Heart right ventricle (tissue), 16 donors: ENCODE measurements at regions of chr2 and their contacts with region 1.

Region 1: GRCh38 chr2:71798266-71799012 is 345.1 kb downstream of the DYSF start:
- DNase-seq: peak; percentile 26 to 38
- ATAC-seq: peak in 5 of 8 donors; percentile 54 to 67 (median 57)
- H3K4me3 ChIP-seq: no peak overlapping the region
- H3K27ac ChIP-seq: no peak overlapping the region
- H3K4me1 ChIP-seq: peaks cover 0 to 20% (median 6%) of the 10 kb centered on the region in 9 donors
- H3K27me3 ChIP-seq: no peaks in the 10 kb centered on the region
- CTCF ChIP-seq: peak; percentile 68 to 83 (median 75)

Region 2: GRCh38 chr2:71348302-71348701 is 450.1 kb before region 1 on chr2:
- intact Hi-C with region 1: no loop called
- DNase-seq: peak in 1 of 2 donors; percentile 21
- ATAC-seq: peak in 5 of 8 donors; percentile 20 to 69 (median 58)
- H3K4me3 ChIP-seq: no peak overlapping the region
- H3K27ac ChIP-seq: no peak overlapping the region
- H3K4me1 ChIP-seq: peaks cover 0 to 51% (median 11%) of the 10 kb centered on the region in 9 donors
- H3K27me3 ChIP-seq: no peaks in the 10 kb centered on the region
- CTCF ChIP-seq: no peak

Region 3: GRCh38 chr2:71545572-71546274 is 252.7 kb before region 1 on chr2:
- intact Hi-C with region 1: loop called in 9 of 10 experiments (anchors 2 to 10 kb)
- DNase-seq: peak in 1 of 2 donors; percentile 55
- ATAC-seq: peak; percentile 59 to 83 (median 78)
- H3K4me3 ChIP-seq: peak overlapping the region in 6 of 10 donors; percentile 15 to 30 (median 24)
- H3K27ac ChIP-seq: peak overlapping the region in 9 of 10 donors; percentile 34 to 79 (median 71)
- H3K4me1 ChIP-seq: peaks cover 0 to 17% (median 13%) of the 10 kb centered on the region in 9 donors
- H3K27me3 ChIP-seq: no peaks in the 10 kb centered on the region
- CTCF ChIP-seq: peak; percentile 66 to 83 (median 75)

Region 4: DNA sequence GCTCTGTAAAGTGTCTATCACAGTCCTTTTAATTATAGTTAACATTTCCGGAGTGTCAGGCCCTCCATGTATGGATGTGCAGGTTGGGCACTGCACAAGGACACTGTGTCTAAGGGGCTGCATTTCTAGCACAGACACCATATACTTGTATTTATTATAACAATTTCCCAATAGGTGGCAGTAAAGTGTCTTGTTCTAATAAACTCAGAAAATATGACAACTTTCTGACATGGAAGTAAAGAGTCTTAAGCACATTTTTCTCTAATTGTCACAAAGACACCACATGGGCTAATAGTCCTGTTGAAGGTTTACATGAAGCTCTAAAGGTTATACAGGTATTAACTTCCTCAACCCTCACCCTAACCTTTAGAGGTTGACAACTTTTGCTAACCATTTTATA is 188.5 kb before region 1 on chr2:
- intact Hi-C with region 1: loop called in 8 of 10 experiments (anchors 2 to 10 kb)
- DNase-seq: no peak
- ATAC-seq: peak in 2 of 8 donors; percentile 27 to 36
- H3K4me3 ChIP-seq: no peak overlapping the region
- H3K27ac ChIP-seq: peak overlapping the region in 1 of 10 donors; percentile 0
- H3K4me1 ChIP-seq: peaks cover 14 to 46% (median 32%) of the 10 kb centered on the region in 9 donors
- H3K27me3 ChIP-seq: no peaks in the 10 kb centered on the region
- CTCF ChIP-seq: peak in 7 of 9 donors; percentile 30 to 59 (median 48)

Region 5: DNA sequence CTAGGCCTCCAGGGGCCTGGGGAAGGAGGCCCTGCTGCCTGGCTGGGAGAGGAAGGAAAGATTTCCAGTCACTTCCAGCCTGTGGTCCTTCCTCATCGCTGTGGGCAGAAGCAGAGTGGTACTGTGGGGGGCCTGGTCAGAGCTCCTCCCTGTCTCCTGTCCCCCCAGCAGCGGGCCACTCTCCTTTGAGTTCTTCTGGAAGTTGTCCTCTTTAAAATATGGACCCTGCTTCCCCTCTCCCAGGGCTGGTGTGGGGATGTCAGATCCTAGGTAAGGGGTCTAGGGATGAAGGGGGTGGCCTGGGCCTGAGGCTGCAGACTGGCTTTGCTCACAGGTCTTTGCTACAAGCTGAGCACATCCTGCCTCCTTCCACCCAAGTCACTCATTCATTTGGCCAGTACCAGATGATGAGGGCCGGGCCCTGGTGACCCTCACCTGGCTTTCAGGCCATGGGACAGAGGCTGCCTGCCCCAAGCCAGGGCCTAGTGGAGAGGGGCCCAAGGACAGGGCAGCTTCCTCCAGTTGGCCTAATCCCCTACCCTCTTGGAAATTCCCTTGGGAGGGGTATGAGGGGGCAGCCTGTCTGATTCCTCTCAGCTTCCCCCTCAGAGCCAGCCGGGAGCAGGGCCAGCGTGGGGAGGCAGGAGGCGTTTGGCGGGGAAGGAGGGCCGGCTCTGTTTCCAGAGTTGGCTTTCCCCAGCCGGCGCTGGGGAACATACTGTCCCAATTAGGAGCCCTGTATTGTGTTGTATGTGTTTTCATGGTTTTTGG is 113.2 kb before region 1 on chr2:
- intact Hi-C with region 1: loop called in 6 of 10 experiments (anchors 5 to 10 kb)
- DNase-seq: no peak
- ATAC-seq: peak; percentile 34 to 90 (median 50)
- H3K4me3 ChIP-seq: no peak overlapping the region
- H3K27ac ChIP-seq: peak overlapping the region in 7 of 10 donors; percentile 4 to 62 (median 30)
- H3K4me1 ChIP-seq: peaks cover 0 to 37% (median 10%) of the 10 kb centered on the region in 9 donors
- H3K27me3 ChIP-seq: no peaks in the 10 kb centered on the region
- CTCF ChIP-seq: no peak

Region 6: DNA sequence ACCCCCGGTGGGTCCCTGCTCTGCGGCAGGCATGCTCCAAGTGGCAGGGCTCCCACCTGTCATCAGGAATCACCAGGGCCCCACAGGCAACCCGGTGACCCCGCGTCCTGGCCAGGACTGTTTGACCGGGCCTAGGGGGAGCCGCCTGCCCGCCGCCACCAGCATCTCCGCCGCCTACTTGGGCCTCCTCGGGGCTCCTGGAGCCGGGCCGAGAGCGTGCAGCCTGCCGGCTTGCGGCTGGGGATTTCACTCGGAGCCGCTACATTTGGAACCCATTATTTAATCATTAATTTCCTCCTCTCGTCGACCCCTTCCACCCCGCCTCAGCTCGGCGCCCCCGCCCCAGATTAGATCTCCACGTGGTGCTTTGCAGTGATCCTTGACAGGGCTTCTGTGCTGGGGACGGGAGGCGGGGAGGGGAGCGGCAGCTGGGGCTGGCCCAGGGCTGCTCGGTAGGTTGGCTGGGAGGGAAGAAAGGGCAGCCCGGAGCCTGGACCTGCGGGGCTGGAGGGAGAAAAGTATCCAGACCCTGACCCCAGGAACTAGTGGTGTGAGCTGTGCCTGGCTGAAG is 53.8 kb after region 1 on chr2:
- intact Hi-C with region 1: no loop called
- DNase-seq: peak in 1 of 2 donors; percentile 40
- ATAC-seq: peak in 5 of 8 donors; percentile 23 to 58 (median 28)
- H3K4me3 ChIP-seq: no peak overlapping the region
- H3K27ac ChIP-seq: no peak overlapping the region
- H3K4me1 ChIP-seq: peaks cover 0 to 30% (median 5%) of the 10 kb centered on the region in 9 donors
- H3K27me3 ChIP-seq: peaks cover 0 to 14% (median 7%) of the 10 kb centered on the region in 7 donors
- CTCF ChIP-seq: no peak

Region 7: GRCh38 chr2:71923887-71924533 is 125.6 kb after region 1 on chr2:
- intact Hi-C with region 1: loop called in 2 of 10 experiments (anchors 5 to 10 kb)
- DNase-seq: peak in 1 of 2 donors; percentile 68
- ATAC-seq: peak; percentile 62 to 91 (median 76)
- H3K4me3 ChIP-seq: no peak overlapping the region
- H3K27ac ChIP-seq: no peak overlapping the region
- H3K4me1 ChIP-seq: peaks cover 0 to 4% (median 0%) of the 10 kb centered on the region in 9 donors
- H3K27me3 ChIP-seq: no peaks in the 10 kb centered on the region
- CTCF ChIP-seq: peak; percentile 72 to 89 (median 86)

Region 8: DNA sequence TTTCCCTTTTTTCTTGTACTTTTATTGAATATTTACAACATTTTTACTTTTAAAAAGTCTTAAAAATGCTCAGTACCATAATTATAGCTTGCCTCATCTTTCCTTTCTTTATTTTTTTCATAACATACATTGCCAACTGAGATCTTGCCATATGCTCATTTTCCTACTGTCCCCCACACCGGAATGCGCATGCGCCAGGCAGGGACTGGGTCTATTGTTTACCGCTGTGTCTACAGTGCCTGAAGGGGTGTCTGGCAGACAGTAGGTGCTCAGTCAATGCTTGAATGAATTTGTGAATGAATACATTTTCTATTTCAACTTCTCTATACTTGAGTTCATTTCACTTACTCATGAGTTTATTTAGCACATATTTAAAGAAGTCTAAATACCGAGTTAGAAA is 191.2 kb after region 1 on chr2:
- intact Hi-C with region 1: loop called in 4 of 10 experiments (anchors 5 to 10 kb)
- DNase-seq: no peak
- ATAC-seq: no peak
- H3K4me3 ChIP-seq: no peak overlapping the region
- H3K27ac ChIP-seq: no peak overlapping the region
- H3K4me1 ChIP-seq: no peaks in the 10 kb centered on the region
- H3K27me3 ChIP-seq: no peaks in the 10 kb centered on the region
- CTCF ChIP-seq: no peak

Region 9: GRCh38 chr2:72150157-72150865 is 351.9 kb after region 1 on chr2:
- intact Hi-C with region 1: loop called in 8 of 10 experiments (anchors 1 to 5 kb)
- DNase-seq: peak; percentile 55 to 84
- ATAC-seq: peak; percentile 68 to 91 (median 80)
- H3K4me3 ChIP-seq: peak overlapping the region in 8 of 10 donors; percentile 18 to 75 (median 58)
- H3K27ac ChIP-seq: no peak overlapping the region
- H3K4me1 ChIP-seq: peaks cover 22 to 47% (median 42%) of the 10 kb centered on the region in 9 donors
- H3K27me3 ChIP-seq: peaks cover 15 to 83% (median 70%) of the 10 kb centered on the region in 7 donors
- CTCF ChIP-seq: peak; percentile 79 to 90 (median 85)